ENCODE measurements at regions of chr7 and their contacts with region 1.

Region 1: DNA sequence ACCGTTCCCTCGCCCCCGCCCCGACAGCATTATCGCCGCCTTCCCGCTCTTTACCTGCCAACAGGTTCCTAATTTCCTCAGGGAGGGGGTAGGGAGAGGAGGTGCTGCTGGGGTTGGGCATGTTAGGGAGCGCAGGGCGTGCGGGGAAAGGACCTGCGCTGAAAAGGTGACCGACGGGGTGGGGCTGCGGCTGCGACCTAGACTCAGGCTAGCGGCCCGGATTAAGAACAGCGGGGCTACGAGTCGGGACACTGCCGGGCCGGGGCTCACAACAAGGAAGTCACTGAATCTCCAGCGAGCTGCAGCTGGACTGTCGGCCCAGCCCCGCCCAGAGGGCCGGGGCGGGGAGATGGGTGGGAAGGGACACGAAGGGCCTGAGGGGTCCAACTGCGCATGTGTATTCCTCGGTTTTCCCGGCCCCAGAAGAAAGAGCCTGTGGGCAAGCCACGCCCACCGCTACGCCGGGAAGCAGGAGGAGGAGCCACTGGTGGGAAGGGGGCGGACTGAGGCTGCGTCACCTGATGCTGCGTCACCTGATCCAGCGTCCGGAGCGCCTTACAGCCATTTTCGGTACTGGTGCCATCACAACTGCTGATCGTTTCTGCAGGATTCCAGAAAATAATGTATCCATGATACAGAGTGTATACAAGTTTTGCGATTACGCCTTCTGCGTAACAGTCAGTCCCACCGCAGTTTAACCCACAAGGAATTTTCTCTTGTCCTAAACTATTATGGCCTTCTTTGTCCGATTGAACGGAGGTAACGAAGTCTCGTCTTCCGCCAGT is at the start of gene SKAP2:
- DNase-seq: peak; percentile 94
- H3K4me3 Mint-ChIP-seq: peak within 1 kb of the TSS; percentile 95
- H3K27ac Mint-ChIP-seq: peak within 1 kb of the TSS; percentile 74
- H3K4me1 Mint-ChIP-seq: peaks cover 18% of the 10 kb centered on the region
- H3K27me3 Mint-ChIP-seq: peaks cover 27% of the 10 kb centered on the region
- total RNA-seq, gene SKAP2: 11.2 to 11.9 TPM

Region 2: DNA sequence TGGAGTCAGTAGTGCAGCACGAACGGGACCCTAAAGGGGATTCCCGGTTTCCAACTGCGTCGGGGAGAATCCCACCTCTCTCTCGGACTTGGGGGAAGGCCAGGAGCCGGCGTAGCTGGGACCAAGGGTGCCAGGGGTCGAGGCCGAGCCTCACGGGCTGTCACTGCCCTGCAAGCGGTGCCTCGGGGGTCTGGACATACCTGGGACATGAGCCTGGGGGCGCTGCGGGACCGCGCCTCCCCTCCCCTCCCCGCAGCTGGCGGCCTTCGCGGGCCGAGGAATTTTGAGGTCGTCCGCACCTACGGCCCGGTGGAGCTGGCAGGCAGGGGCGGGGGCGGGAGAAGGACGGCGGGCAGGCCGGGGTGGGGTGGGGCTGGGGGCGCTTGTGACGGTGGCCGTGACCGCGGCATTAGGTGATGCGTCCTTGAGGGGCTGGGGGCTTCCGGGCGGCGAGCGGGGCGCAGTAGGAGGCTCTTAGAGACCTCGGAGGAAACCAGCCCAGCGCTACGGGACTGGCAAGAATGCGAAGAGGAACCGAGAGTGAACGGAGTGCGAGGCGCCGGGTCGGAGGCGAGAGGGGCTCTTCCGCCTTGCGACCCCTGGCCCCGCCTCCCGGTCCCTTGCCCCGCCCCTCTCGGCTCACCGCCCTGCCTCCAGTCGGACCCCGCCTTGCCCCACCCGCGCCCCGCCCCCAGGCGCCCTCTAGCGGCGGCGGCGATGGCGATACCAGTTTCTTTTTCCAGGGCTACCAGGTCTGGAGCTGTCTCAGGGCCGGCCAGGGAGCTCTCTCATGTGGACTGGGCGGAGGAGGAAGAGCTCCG is 1684.5 kb before region 1 on chr7:
- CTCF ChIA-PET with region 1: no interaction called
- POLR2A ChIA-PET with region 1: no interaction called
- intact Hi-C with region 1: loop called (anchors 5 kb)
- DNase-seq: peak; percentile 96
- H3K4me3 Mint-ChIP-seq: peak overlapping the region; percentile 79
- H3K27ac Mint-ChIP-seq: peak overlapping the region; percentile 73
- H3K4me1 Mint-ChIP-seq: peaks cover 17% of the 10 kb centered on the region
- H3K27me3 Mint-ChIP-seq: no peaks in the 10 kb centered on the region

Region 3: DNA sequence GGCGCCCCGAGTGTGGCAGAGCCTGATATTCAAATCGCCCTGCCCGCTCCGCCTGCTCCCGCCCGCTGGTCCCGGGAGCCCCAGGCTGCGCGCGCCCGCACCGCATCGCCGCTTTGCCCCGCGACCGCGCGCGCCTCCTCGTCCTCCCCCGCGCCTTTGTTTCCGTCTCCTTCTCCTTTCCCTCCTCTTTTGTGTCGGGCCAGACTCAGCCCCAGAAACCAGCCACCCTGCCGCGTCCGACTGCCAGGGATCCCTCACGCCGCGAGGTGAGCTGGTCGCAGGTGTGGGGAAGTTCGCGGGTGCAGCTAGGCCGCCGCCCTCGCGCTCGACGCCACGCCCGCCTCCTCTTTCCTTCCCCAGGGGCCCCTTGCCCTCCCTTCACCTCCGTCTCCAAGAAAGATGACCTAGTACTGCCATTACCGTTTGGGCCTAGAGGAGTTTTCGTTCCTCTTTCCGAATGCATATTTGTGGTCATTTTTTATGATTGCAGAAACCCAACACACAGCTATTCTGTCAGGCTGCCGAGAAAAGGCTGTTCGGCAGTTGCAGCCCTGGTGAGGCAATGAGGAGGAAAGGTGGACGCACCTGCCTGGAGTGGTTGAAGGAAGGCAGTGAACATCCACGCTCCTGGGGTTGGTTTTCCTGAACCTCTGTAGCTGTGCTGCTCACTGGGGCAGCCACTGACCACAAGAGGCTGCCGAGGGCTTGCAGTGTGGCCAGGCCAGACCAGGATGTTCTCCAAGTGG is 465.6 kb before region 1 on chr7:
- CTCF ChIA-PET with region 1: no interaction called
- POLR2A ChIA-PET with region 1: no interaction called
- intact Hi-C with region 1: loop called (anchors 1 kb)
- DNase-seq: peak; percentile 70
- H3K4me3 Mint-ChIP-seq: peak overlapping the region; percentile 86
- H3K27ac Mint-ChIP-seq: peak overlapping the region; percentile 64
- H3K4me1 Mint-ChIP-seq: peaks cover 13% of the 10 kb centered on the region
- H3K27me3 Mint-ChIP-seq: peaks cover 41% of the 10 kb centered on the region

Region 4: DNA sequence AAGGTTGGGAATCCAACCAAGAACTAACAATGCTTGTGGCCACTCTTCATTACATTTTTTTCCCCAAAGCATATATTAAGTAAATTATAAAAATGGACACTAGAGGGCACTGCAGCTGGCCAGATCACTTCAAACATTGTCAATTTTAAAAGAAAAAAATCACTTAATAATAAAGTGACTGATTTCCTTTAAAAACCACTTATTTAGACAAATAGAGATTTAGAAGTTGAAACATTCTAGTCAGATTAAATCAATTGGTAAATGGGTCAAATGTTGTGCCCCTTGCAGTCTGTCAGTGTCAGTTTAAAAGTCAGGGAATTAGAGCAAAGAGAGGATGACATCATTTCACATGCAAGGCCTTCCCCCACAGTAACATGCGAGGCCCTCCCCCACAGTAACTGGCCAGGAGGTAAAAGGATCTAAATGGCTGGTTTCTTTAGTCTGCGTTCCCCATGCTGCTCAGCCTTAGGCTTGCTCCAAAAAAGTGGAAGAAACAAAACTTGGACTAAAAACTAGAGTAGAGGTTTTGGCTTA is 178.0 kb before region 1 on chr7:
- CTCF ChIA-PET with region 1: no interaction called
- POLR2A ChIA-PET with region 1: no interaction called
- intact Hi-C with region 1: loop called (anchors 5 kb)
- DNase-seq: no peak
- H3K4me3 Mint-ChIP-seq: no peak overlapping the region
- H3K27ac Mint-ChIP-seq: no peak overlapping the region
- H3K4me1 Mint-ChIP-seq: no peaks in the 10 kb centered on the region
- H3K27me3 Mint-ChIP-seq: peaks cover 13% of the 10 kb centered on the region

Region 5: DNA sequence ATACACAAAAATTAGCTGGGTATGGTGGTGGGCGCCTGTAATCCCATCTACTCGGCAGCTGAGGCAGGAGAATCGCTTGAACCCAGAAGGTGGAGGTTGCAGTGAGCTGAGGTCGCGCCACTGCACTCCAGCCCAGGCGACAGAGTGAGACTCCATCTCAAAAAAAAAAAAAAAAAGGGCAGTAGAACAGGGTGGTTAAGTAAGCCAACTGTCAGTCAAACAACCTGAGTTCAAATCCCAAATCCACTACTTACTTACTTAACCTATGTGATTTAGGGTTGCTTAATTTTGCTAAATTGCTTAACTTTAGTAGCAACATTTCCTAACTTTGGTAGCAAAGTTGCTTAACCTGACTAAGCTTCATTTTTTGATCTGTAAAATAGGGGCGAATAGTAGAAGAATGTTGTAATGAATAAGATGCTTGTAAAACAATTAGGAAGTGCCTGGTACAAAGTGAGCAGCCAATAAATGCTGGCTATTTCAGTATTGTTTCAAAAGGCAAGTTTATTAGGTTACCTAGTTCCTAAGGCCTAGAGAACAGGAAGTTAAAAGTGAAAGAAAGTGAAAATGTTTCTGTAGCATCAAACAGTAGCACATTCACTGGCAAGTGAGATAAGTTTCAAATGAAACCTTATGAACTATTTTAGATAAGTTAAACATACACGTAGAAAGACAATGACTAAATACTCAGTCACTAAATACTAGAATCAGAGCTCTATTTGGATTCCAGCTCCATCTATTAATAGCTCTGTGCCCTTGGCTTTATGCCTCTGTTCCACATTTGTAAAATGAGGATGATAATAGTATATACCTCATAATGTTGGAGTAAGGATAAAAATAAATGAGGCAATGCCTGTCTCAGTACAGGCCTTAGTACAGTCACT is 167.0 kb after region 1 on chr7:
- CTCF ChIA-PET with region 1: no interaction called
- POLR2A ChIA-PET with region 1: no interaction called
- intact Hi-C with region 1: loop called (anchors 10 kb)
- DNase-seq: no peak
- H3K4me3 Mint-ChIP-seq: no peak overlapping the region
- H3K27ac Mint-ChIP-seq: no peak overlapping the region
- H3K4me1 Mint-ChIP-seq: peaks cover 15% of the 10 kb centered on the region
- H3K27me3 Mint-ChIP-seq: no peaks in the 10 kb centered on the region

Region 6: DNA sequence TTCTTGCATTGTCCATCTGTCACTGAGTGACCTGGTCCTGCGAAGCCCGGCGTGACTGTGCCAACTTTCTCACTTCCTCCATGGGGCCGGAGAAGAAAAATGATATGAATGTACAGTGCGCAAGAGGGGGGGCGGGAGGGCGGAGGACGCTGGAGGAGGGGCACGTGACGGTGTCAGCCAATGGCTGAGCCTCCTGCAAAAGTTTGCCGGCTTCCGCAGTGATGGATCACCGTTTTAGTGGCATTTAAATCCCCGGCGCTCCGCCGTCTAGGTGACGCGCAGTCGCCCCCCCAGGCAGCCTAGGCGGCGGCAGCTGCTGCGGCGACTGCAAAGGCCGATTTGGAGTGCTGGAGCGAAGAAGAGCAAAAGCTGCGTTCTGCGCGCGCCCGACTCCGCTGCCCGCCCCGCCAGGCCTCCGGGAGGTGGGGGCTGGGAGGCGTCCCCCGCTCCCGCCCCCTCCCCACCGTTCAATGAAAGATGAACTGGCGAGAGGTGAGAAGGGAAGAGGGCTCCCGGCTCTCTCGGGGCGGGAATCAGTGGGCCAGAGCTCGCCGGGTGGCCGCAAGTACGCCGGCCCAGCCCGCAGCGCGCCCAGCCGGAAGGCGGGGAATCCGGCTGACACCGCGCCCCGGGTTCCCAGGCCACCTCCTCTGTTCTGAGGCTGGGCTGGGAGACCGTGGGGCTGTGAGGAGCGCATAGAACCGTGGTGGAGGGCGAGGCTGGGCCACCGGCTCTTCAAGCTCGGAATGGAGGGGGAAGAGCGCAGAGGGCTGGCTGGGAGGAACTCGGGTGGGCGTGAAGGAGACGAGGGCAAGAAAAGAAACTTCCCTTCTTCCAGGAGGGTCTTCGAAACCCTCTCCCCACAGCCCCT is 231.6 kb after region 1 on chr7 and contains the start of gene HOXA1:
- CTCF ChIA-PET with region 1: no interaction called
- POLR2A ChIA-PET with region 1: no interaction called
- intact Hi-C with region 1: loop called (anchors 1 kb)
- DNase-seq: peak; percentile 85
- H3K4me3 Mint-ChIP-seq: peak within 1 kb of the TSS; percentile 66
- H3K27ac Mint-ChIP-seq: no peak within 1 kb of the TSS
- H3K4me1 Mint-ChIP-seq: peaks cover 15% of the 10 kb centered on the region
- H3K27me3 Mint-ChIP-seq: peaks cover 62% of the 10 kb centered on the region
- total RNA-seq, gene HOXA1: 0.29 to 0.43 TPM

Measured in activated CD4-positive, alpha-beta memory T cell treated with anti-CD3 and anti-CD28 coated beads for 36 hours (primary cell).